ENCODE measurements at regions of chr16 and their contacts with region 1.

Region 1: DNA sequence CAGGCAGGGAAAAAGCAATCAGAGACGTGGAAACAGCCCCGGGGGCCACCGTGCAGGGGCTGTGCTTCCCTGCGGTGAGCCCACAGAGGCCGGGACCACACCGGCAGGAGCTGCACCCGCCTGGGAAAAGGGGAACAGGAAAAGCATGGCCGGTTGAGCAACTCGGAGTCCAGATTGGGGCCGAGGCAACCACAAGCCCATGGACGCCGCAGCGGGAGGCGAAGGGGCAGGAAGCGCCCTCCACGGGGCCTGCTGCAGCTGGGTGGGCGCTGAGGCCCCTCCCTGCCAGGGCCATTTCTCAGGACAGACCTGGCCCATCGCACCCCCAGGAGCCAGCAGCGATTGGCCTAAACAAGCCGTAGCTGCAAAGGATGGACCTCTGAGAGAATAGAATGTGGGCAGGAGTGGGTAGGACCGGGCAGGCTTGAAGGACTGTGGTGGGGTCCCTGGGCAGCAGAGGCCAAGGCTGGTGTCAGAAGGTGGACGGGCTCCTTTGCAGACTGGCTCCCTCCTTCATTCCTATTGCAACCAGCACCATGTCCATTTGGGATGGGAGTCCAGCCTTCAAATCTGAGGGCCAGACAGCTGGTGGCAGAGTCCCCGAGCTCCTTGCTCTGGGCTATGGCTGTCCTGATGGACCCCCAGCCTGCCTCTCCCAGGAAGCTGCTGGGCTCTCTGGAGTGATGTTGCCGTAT is 30.4 kb downstream of the COX4I1 start:
- DNase-seq: peak in 6 of 7 donors; percentile 30 to 60 (median 44)
- H3K4me3 ChIP-seq: no peak overlapping the region
- H3K27ac ChIP-seq: no peak overlapping the region
- H3K4me1 ChIP-seq: no peaks in the 10 kb centered on the region
- H3K27me3 ChIP-seq: no peaks in the 10 kb centered on the region
- CTCF ChIP-seq: no peak
- POLR2A ChIP-seq: no peak

Region 2: DNA sequence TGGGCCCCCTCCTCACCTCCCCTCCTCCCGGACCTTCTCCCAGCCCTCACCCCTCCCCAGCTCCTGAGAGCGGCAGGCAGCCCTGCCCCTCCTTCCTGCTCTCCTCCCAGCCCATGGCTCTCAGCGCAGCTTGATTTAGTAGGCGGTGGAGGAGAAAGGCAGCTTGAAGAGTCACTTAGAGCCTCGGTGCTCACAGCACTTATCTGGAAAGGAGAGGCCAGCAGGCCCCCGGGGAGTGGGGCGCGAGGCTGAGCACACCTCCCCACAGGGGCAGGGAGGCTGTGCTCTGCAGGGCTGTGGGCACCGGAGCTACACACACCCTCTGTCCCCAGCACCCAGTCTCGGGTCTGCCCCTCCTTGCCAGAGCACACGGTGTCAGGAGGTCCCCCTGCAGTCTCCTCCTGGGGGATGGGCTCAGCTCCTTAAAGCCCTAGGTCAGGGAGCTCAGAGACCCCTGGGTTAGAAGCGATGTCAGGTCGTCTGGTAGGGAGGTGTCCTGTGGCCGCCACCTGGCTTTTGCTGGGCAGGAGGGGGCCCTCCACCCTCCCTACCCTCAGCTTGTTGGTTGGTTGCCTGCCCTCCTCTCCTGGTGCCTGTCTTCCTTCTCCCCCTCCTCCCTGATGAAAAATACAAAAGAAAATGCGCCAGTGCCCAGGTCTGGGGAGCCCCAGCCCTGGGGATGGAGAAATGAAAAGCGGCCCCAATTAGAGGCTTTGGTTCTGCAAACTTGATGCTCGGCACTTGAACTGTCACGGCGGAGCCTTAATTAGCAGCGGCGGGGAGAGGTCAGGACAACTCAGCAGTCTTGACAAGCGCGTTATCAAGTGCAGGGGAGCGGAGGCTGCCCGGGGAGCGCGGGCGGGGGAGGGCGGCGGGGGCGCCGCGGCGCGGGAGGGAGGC is 367.8 kb before region 1 on chr16:
- intact Hi-C with region 1: no loop called
- DNase-seq: peak in 5 of 7 donors; percentile 34 to 57 (median 54)
- H3K4me3 ChIP-seq: peak overlapping the region in 1 of 4 donors; percentile 49
- H3K27ac ChIP-seq: peak overlapping the region in 2 of 5 donors; percentile 66 to 75
- H3K4me1 ChIP-seq: peaks cover 33 to 69% of the 10 kb centered on the region in 2 donors
- H3K27me3 ChIP-seq: no peaks in the 10 kb centered on the region
- CTCF ChIP-seq: no peak
- POLR2A ChIP-seq: no peak

Region 3: GRCh38 chr16:85986931-85987749 is 157.2 kb after region 1 on chr16:
- intact Hi-C with region 1: loop called in 1 of 2 experiments (anchors 5 kb)
- DNase-seq: no peak
- H3K4me3 ChIP-seq: no peak overlapping the region
- H3K27ac ChIP-seq: no peak overlapping the region
- H3K4me1 ChIP-seq: no peaks in the 10 kb centered on the region
- H3K27me3 ChIP-seq: peaks cover 4% of the 10 kb centered on the region
- CTCF ChIP-seq: peak in 3 of 6 experiments; percentile 28 to 46 (median 29)
- POLR2A ChIP-seq: no peak

Measured in adrenal gland (tissue), 19 donors.